ENCODE measurements at regions of chr5 and their contacts with region 1.

Region 1: GRCh38 chr5:61641747-61642578 is 309.9 kb downstream of the ZSWIM6 start:
- DNase-seq: no peak
- H3K4me3 ChIP-seq: no peak overlapping the region
- H3K27ac ChIP-seq: no peak overlapping the region
- H3K4me1 ChIP-seq: no peaks in the 10 kb centered on the region
- H3K27me3 ChIP-seq: no peaks in the 10 kb centered on the region
- CTCF ChIP-seq: peak in 2 of 4 experiments; percentile 15 to 23
- POLR2A ChIP-seq: no peak

Region 2: GRCh38 chr5:60959156-60959555 is 682.8 kb before region 1 on chr5:
- intact Hi-C with region 1: loop called (anchors 5 kb)
- DNase-seq: no peak
- H3K4me3 ChIP-seq: no peak overlapping the region
- H3K27ac ChIP-seq: no peak overlapping the region
- H3K4me1 ChIP-seq: no peaks in the 10 kb centered on the region
- H3K27me3 ChIP-seq: no peaks in the 10 kb centered on the region
- CTCF ChIP-seq: peak in 2 of 4 experiments; percentile 10 to 23
- POLR2A ChIP-seq: no peak